ENCODE measurements at regions of chr15 and their contacts with region 1.

Region 1: GRCh38 chr15:48842501-48842900 is 31.6 kb upstream of the CEP152 start:
- DNase-seq: no peak
- H3K4me3 ChIP-seq: no peak overlapping the region
- H3K27ac ChIP-seq: no peak overlapping the region
- H3K4me1 ChIP-seq: no peaks in the 10 kb centered on the region
- H3K27me3 ChIP-seq: no peaks in the 10 kb centered on the region
- CTCF ChIP-seq: no peak

Region 2: GRCh38 chr15:48131324-48131723 is 711.2 kb before region 1 on chr15:
- CTCF ChIA-PET with region 1: no interaction called
- POLR2A ChIA-PET with region 1: interaction called, 10 read pairs
- intact Hi-C with region 1: no loop called
- DNase-seq: no peak
- H3K4me3 ChIP-seq: no peak overlapping the region
- H3K27ac ChIP-seq: no peak overlapping the region
- H3K4me1 ChIP-seq: no peaks in the 10 kb centered on the region
- H3K27me3 ChIP-seq: no peaks in the 10 kb centered on the region
- CTCF ChIP-seq: no peak

Region 3: DNA sequence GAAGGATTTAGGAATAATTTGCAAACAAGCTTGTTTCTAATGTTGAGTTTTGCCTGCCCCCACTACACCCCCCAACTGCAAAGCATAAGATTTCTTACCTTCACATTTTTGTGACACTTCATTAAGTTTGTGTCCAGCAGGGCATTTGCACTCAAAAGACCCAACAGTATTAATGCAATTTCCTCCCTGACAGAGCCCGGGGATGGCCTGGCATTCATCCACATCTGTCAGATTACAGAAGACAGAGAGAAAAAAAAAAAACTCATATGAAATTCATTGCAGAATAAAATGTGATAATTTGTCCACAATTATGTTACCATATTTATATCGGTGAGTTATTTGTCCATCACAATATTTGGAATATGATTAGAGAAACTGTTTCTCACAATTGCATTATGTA is 308.5 kb before region 1 on chr15:
- CTCF ChIA-PET with region 1: no interaction called
- POLR2A ChIA-PET with region 1: interaction called, 10 read pairs
- intact Hi-C with region 1: no loop called
- DNase-seq: peak; percentile 42
- H3K4me3 ChIP-seq: no peak overlapping the region
- H3K27ac ChIP-seq: no peak overlapping the region
- H3K4me1 ChIP-seq: peaks cover 63% of the 10 kb centered on the region
- H3K27me3 ChIP-seq: no peaks in the 10 kb centered on the region
- CTCF ChIP-seq: no peak

Region 4: GRCh38 chr15:48627260-48627960 is 215.1 kb before region 1 on chr15:
- CTCF ChIA-PET with region 1: no interaction called
- POLR2A ChIA-PET with region 1: no interaction called
- intact Hi-C with region 1: no loop called
- DNase-seq: peak; percentile 26
- H3K4me3 ChIP-seq: no peak overlapping the region
- H3K27ac ChIP-seq: no peak overlapping the region
- H3K4me1 ChIP-seq: peaks cover 25% of the 10 kb centered on the region
- H3K27me3 ChIP-seq: no peaks in the 10 kb centered on the region
- CTCF ChIP-seq: no peak

Region 5: GRCh38 chr15:48717458-48717857 is 125.0 kb before region 1 on chr15:
- CTCF ChIA-PET with region 1: no interaction called
- POLR2A ChIA-PET with region 1: no interaction called
- intact Hi-C with region 1: no loop called
- DNase-seq: no peak
- H3K4me3 ChIP-seq: no peak overlapping the region
- H3K27ac ChIP-seq: no peak overlapping the region
- H3K4me1 ChIP-seq: no peaks in the 10 kb centered on the region
- H3K27me3 ChIP-seq: no peaks in the 10 kb centered on the region
- CTCF ChIP-seq: peak; percentile 30; the same call in 1 of the 2 replicates